ENCODE measurements at regions of chr5 and their contacts with region 1.

Region 1: DNA sequence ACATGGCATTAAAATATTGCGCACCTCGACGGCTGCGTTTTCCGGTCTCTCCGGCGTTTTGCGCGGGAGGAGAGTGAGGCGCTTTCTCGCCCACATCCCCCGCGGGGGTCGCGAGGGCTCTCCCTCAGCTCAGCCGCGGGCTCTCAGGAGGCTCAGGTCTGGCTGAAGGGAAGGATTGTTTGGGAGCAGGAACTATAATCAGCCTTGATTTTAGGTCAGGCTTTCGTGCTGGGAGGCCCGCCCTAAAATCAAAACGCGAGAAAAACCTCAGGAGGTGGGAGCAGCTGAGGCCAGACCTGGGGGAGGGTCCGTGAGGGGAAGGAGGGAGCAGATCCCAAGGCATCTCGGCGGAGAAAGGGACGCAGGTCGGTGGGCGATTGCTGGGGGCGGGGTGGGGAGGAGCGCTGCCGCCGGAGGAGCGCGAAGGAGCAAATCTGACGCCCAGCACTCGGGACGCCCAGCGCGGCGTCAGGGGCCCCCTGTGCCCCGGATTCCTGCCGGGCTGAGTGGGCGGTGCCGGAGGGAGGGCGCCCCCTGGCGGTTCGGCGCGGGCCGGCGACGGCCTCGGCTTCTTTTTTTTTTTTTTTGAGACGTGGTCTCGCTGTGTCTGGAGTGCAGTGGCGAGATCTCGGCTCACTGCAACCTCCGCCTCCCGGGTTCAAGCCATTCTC is 18.7 kb upstream of the RNF130 start:
- DNase-seq: peak; percentile 76
- ATAC-seq: peak; percentile 92 to 94

Region 2: DNA sequence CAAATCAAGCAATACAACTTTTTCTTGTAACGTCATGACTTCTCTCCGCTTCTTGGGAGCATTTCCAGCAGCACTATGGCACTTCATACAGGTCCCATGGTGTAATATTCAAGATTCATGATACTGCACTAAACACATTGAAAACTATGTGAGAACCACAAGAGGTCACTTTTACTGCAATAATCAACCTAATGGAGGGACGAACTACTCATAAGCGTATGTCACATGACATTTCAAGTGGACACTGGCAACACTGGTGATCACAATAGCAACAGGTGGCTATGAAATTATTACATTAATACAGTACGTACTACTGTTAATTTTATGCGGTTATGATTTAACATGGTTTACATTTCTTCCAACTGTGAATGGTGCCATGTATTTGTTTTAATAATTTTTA is 103.9 kb before region 1 on chr5:
- intact Hi-C with region 1: loop called in 1 of 2 experiments (anchors 5 kb)
- DNase-seq: no peak
- ATAC-seq: peak; percentile 55 to 78

Measured in left cardiac atrium (tissue), 4 donors.